Cardiac septum (tissue), 1 donor: ENCODE measurements at regions of chr5 and their contacts with region 1.

Region 1: DNA sequence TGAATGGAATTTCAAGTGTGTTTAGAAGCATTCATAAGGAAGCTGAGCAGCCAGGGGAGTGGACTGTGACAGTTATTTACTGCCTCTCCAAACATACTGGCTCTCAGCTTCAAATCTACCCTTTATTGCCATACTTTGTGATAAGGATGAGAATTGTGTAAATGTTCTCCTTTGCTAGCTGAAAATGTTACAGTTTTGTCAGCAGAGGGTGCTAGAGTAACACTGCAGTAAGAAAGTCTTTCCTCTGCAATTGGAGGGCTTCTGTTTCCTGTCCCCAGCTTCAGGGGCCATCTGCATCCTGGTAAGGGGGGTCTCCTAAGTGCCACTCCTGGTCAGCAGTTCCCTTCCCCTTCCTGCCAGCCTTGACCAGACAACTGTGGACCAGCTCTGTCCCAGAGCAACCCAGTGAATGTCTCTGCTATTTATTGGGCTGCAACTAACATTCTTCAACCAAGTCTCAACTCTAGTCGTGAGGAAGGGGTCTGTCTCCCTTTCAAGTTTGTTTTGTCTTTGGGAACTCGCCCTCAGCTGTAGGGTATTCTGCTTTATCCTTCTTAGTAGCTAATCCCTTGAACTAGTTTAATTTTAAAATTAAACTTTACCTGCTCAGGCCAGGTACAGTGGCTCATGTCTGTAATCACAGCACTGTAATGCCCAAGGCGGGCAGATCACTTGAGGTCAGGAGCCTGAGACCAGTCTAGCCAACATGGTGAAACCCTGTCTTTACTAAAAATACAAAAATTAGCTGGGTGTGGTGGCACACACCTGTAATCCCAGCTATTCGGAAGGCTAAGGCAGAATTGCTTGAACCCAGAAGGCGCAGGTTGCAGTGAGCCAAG is 45.3 kb downstream of the RAPGEF6 start:
- DNase-seq: no peak

Region 2: DNA sequence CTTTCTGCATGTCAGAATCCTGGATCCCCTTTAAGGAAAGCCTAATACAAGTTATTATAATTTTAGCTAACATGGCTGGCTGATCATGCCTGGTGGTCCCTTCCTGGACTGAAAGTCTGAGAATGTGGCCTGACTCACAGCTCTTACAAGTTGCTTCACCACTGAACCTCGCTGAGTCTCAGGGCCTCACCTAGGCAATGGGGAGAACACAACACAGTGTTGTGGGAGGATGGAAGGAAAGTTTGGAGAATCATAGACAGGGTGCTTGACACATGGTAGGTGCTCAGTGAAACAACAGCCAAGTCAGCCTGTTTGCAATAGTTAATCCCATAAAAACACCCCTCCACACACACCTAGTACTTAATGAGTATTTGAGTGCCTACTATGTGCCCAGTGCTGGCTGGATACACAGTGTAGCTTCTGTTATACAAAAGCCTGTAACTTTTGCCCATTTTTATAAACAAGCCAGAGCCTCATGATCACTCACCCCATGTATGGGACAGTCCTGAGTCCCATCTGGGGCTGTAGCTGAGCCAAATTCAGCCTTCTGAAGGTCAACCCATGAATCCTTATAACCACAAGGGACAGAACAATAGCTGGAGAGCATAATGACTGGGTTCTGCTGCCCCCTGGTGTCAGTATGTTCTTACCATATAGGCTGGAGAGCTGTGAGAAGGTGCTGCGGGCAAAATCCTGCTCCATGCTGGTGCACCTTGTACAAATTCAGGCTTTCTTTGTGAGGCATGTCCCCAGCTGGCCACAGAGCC is 417.9 kb after region 1 on chr5:
- intact Hi-C with region 1: loop called (anchors 1 kb)
- DNase-seq: peak; percentile 78

Region 3: GRCh38 chr5:132064738-132065331 is 475.1 kb after region 1 on chr5:
- intact Hi-C with region 1: loop called (anchors 1 kb)
- DNase-seq: peak; percentile 76